Tibial artery (tissue), 4 donors: ENCODE measurements at regions of chr6 and their contacts with region 1.

Region 1: DNA sequence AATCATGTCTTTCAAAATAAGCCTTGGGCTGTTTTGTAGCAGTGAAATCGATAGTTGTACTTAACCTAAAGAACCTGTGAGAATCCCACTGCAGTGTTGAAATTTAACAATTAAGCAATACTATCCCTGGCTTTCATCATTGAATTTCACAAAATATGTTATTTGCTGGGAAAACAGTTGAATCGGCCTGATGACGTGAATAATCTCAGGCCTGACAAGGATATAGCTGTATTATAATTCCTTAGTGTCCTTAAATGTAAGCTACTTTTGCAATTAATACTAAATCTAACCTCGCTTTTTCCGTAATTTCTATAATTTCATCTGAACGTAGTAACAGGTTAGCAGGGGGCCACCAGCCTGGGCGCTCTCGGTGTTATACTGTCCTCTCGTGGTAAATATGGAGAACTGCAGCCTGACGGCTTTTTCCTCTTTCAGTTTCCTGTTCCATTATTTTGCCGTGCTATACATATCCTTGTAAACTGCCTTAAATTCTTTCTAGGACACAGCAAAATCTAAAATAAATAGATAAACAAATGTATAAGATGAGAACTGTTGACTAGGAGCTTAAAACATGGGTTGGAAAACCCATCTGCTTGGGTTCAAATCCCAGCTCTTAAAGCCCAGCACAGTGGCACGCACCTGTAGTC is 24.0 kb downstream of the MTFR2 start:
- DNase-seq: peak in 1 of 2 donors; percentile 48
- H3K4me3 ChIP-seq: peak overlapping the region in 1 of 2 donors; percentile 37
- H3K27ac ChIP-seq: no peak overlapping the region
- H3K4me1 ChIP-seq: peaks cover 0 to 5% (median 0%) of the 10 kb centered on the region in 4 donors
- H3K27me3 ChIP-seq: no peaks in the 10 kb centered on the region
- CTCF ChIP-seq: peak; percentile 98 to 100

Region 2: DNA sequence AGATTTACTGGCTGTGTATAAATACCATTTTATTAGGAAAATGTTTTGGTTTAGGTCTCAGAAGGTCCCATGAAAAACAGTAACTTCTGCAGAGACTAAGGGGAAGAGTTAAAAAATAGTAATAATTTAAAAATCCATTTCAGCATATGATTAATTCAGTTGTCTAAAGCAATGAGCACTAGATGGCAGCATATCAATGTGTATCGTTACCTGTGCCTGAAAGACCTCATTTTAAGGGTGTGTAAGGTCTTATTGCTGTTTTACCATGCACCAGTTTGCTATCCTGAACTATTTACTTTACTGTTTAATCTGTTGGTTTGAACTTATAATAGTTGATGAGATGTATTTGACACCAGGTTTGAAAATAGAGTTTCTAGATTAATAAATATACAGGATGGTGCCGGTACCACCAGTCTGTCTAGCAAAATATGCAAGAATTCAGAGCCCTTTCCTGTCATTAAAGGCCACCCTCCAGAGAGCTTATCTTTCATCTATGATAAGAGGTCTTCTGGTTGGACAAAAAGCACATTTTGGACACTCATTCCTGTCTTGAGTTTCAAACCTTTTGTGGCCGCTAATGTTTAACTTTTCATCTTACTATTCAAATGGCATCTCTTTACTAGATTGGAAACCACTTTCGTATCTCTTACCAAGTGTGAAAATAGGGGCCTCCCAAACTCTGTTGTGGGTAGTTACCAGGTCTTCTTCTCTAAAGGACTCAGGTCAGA is 719.7 kb before region 1 on chr6:
- intact Hi-C with region 1: loop called (anchors 5 kb)
- DNase-seq: no peak
- H3K4me3 ChIP-seq: no peak overlapping the region
- H3K27ac ChIP-seq: no peak overlapping the region
- H3K4me1 ChIP-seq: no peaks in the 10 kb centered on the region
- H3K27me3 ChIP-seq: no peaks in the 10 kb centered on the region
- CTCF ChIP-seq: peak; percentile 41 to 46

Region 3: DNA sequence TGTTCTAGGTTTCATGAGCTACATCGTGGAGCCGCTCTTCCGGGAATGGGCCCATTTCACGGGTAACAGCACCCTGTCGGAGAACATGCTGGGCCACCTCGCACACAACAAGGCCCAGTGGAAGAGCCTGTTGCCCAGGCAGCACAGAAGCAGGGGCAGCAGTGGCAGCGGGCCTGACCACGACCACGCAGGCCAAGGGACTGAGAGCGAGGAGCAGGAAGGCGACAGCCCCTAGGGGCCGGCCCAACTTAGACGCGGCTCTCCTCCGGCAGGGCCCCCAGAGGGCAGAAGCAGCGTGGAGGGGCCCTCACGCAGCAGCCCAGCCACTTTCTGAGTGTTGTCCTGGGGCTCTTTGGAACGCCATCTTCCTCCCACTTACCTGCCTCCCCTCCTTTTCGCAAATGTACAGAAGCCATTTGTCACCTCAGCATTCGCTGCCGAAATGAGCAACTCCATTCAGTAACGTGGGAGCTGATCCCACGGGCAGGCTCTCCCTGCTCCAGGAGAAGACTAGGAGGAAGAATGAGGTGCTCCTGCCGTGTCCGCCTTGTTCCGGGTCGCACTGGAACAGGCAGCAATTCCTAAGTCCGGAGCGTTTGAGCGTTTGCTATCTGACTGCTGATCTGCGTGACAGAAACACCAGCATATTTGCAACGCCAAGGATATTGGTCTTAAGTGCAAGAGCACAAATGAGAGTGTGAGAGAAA is 34.4 kb before region 1 on chr6:
- intact Hi-C with region 1: no loop called
- DNase-seq: no peak
- H3K4me3 ChIP-seq: no peak overlapping the region
- H3K27ac ChIP-seq: no peak overlapping the region
- H3K4me1 ChIP-seq: no peaks in the 10 kb centered on the region
- H3K27me3 ChIP-seq: no peaks in the 10 kb centered on the region
- CTCF ChIP-seq: no peak